Esophagus muscularis mucosa (tissue), 4 donors: ENCODE measurements at regions of chr17 and their contacts with region 1.

Region 1: DNA sequence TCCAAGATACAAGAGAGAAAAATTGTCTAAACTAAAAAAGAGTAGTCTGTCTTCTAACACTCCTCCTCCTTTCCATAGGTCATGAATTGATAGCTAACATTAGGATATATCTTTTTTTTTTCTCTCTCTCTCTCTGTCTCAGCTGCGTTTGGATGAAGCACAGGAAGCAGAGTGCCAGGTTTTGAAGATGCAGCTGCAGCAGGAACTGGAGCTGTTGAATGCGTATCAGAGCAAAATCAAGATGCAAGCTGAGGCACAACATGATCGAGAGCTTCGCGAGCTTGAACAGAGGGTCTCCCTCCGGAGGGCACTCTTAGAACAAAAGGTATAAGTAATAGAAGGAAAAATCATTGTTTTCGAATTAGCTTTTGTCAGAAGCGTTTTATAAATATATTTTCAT is 32.9 kb downstream of the ABHD15 start:
- DNase-seq: no peak
- H3K4me3 ChIP-seq: no peak overlapping the region
- H3K27ac ChIP-seq: no peak overlapping the region
- H3K4me1 ChIP-seq: no peaks in the 10 kb centered on the region
- H3K27me3 ChIP-seq: no peaks in the 10 kb centered on the region
- CTCF ChIP-seq: no peak
- EP300 ChIP-seq: no peak
- POLR2A ChIP-seq: no peak

Region 2: DNA sequence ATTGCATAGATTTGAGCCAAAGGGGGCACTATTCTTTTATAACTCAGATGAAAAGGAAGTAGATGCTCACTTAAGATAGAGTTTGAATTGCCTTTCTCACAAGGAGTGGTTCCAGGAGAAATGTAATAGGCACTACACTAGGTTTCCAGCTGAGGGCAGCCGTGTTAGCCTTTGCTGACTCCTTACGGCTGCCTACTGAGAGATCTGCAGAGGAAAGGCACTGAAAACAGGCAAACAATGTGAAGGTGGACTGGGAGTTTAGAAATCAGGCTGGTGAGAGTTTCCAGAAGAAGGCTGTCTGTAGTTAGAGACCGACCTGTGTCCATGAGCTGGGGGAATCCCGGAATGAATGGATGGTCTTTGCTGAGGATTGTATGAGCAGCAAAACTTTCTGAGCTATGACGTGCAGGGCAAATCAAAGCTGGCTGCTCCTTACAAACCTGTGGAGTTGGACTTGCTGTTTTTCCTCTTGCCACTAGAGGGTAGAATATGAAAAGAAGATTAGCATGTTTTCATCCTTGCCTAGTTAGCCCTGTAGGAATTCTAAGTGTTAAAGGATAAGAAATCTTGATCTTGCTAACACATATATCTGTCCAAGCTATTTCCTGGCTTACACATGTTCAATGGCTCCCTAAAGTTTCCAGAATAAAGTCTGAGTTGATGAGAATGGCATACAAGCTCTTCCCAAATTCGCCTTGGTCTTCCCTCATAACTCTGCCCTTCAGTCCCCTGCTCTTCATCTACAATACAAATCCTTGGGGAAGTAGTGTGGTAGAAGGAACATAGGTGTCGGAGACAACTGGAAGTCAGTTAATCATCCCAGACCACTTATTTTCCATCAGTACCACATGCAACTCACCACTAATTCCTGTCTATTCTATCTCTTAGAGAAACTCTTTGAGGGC is 163.9 kb before region 1 on chr17:
- intact Hi-C with region 1: loop called (anchors 2 kb)
- DNase-seq: no peak
- H3K4me3 ChIP-seq: peak overlapping the region in 3 of 4 donors; percentile 15 to 32 (median 32)
- H3K27ac ChIP-seq: peak overlapping the region; percentile 42 to 66 (median 58)
- H3K4me1 ChIP-seq: peaks cover 8 to 21% (median 18%) of the 10 kb centered on the region in 4 donors
- H3K27me3 ChIP-seq: no peaks in the 10 kb centered on the region
- CTCF ChIP-seq: peak; percentile 72 to 86 (median 84)
- EP300 ChIP-seq: no peak
- POLR2A ChIP-seq: no peak